ENCODE measurements at regions of chr19 and their contacts with region 1.

Region 1: GRCh38 chr19:10431943-10432735 is 11.8 kb downstream of the PDE4A start:
- DNase-seq: peak; percentile 88
- ATAC-seq: peak; percentile 53
- H3K4me3 ChIP-seq: peak overlapping the region in 4 of 5 experiments; percentile 29 to 60 (median 43)
- H3K4me3 Mint-ChIP-seq: peak overlapping the region; percentile 94
- H3K27ac ChIP-seq: no peak overlapping the region
- H3K27ac Mint-ChIP-seq: peak overlapping the region; percentile 91
- H3K4me1 ChIP-seq: peaks cover 49 to 55% of the 10 kb centered on the region in 2 donors
- H3K4me1 Mint-ChIP-seq: peaks cover 60% of the 10 kb centered on the region
- H3K27me3 ChIP-seq: peaks cover 0 to 25% (median 12%) of the 10 kb centered on the region in 4 experiments
- H3K27me3 Mint-ChIP-seq: peaks cover 13% of the 10 kb centered on the region
- CTCF ChIP-seq: no peak

Region 2: DNA sequence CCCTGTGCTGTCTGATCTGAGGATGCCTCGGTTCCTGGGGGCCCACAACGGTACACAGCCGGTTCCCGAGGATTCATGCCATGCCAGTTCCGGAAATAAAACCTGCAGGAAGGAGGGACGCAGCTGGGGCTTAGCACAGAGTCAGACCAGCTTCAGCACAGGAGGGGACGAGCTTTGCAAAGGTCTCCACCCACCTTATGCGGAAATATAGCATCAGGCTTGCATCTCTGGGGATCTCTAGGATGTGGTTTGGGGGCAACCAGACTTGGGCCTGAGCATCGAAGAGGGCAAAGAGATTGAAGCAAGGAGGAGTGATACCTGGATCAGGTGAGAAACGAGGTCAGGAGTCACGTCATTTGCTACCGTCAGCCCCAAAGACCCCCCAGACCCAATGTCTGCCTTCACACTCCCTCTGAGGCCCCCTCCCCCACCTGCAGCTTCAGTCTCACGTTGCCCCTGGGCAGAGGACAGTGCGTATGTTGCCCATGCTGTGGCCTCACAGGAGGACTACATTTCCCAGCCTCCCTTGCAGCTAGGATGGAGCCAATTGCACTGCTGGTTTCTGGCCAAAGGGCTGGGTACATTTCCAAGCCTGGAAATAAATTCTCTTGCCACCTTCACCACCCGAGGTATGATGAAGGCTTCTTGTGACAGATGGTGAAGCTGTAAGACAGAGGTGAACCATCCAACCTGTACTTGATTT is 63.9 kb before region 1 on chr19:
- CTCF ChIA-PET with region 1: no interaction called
- POLR2A ChIA-PET with region 1: no interaction called
- intact Hi-C with region 1: no loop called
- DNase-seq: no peak
- ATAC-seq: no peak
- H3K4me3 ChIP-seq: no peak overlapping the region
- H3K4me3 Mint-ChIP-seq: no peak overlapping the region
- H3K27ac ChIP-seq: no peak overlapping the region
- H3K27ac Mint-ChIP-seq: no peak overlapping the region
- H3K4me1 ChIP-seq: peaks cover under 1 to 3% of the 10 kb centered on the region in 2 donors
- H3K4me1 Mint-ChIP-seq: no peaks in the 10 kb centered on the region
- H3K27me3 ChIP-seq: no peaks in the 10 kb centered on the region
- H3K27me3 Mint-ChIP-seq: no peaks in the 10 kb centered on the region
- CTCF ChIP-seq: no peak

Region 3: DNA sequence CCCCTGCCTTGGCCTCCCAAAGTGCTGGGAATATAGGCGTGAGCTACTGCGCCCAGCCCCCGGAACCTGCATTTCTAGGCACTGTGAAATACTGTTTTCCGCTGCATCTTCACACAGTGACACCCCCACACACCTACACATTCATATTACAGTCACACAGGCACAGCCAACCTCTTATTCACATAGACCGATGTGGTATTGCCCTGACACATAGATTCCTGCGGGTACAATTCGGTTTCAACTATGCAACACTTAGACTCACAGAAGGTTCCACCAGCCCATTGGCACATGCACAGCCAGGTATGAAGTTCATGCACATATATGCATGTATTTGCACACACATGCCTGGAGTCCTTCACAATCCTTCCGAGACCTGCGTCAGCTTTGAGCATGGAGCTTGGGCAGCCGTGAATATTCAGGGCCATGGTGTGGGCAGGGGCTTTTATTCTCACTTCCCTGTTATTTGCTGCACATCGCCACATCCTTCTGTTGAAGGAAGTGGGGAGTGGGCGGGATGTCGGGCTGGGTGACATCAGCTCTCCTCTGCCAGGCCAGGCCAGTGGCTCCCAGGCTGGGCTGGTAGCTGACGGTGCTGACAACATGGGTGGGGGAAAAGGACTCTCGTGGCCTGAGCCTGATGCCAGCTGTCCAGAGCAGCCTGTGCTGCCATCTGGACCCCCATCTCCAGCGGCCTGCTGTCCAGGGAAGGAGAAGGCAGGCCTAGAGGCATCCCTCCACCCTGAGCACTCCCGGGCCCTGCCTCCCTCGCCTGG is 23.4 kb before region 1 on chr19:
- CTCF ChIA-PET with region 1: interaction called, 282 read pairs
- POLR2A ChIA-PET with region 1: interaction called, 15 read pairs
- intact Hi-C with region 1: loop called (anchors 1 kb)
- DNase-seq: peak; percentile 85
- ATAC-seq: peak; percentile 46
- H3K4me3 ChIP-seq: peak overlapping the region in 4 of 5 experiments; percentile 0 to 50 (median 25)
- H3K4me3 Mint-ChIP-seq: peak overlapping the region; percentile 71
- H3K27ac ChIP-seq: peak overlapping the region; percentile 78
- H3K27ac Mint-ChIP-seq: peak overlapping the region; percentile 74
- H3K4me1 ChIP-seq: peaks cover 69 to 97% of the 10 kb centered on the region in 2 donors
- H3K4me1 Mint-ChIP-seq: peaks cover 72% of the 10 kb centered on the region
- H3K27me3 ChIP-seq: no peaks in the 10 kb centered on the region
- H3K27me3 Mint-ChIP-seq: no peaks in the 10 kb centered on the region
- CTCF ChIP-seq: no peak

Region 4: GRCh38 chr19:10416380-10417257 is 15.5 kb before region 1 on chr19:
- CTCF ChIA-PET with region 1: interaction called, 115 read pairs
- POLR2A ChIA-PET with region 1: interaction called, 19 read pairs
- intact Hi-C with region 1: loop called (anchors 1 kb)
- DNase-seq: peak; percentile 99
- ATAC-seq: peak; percentile 70
- H3K4me3 ChIP-seq: peak overlapping the region; percentile 15 to 69 (median 49)
- H3K4me3 Mint-ChIP-seq: peak overlapping the region; percentile 85
- H3K27ac ChIP-seq: peak overlapping the region in 1 of 2 donors; percentile 28
- H3K27ac Mint-ChIP-seq: peak overlapping the region; percentile 94
- H3K4me1 ChIP-seq: peaks cover 66 to 82% of the 10 kb centered on the region in 2 donors
- H3K4me1 Mint-ChIP-seq: peaks cover 59% of the 10 kb centered on the region
- H3K27me3 ChIP-seq: peaks cover 0 to 46% (median 28%) of the 10 kb centered on the region in 4 experiments
- H3K27me3 Mint-ChIP-seq: peaks cover 29% of the 10 kb centered on the region
- CTCF ChIP-seq: peak; percentile 100

Region 5: GRCh38 chr19:10450853-10451609 is 18.9 kb after region 1 on chr19:
- CTCF ChIA-PET with region 1: interaction called, 10 read pairs
- POLR2A ChIA-PET with region 1: no interaction called
- intact Hi-C with region 1: no loop called
- DNase-seq: no peak
- ATAC-seq: no peak
- H3K4me3 ChIP-seq: no peak overlapping the region
- H3K4me3 Mint-ChIP-seq: no peak overlapping the region
- H3K27ac ChIP-seq: no peak overlapping the region
- H3K27ac Mint-ChIP-seq: no peak overlapping the region
- H3K4me1 ChIP-seq: peaks cover 0 to 4% of the 10 kb centered on the region in 2 donors
- H3K4me1 Mint-ChIP-seq: peaks cover 5% of the 10 kb centered on the region
- H3K27me3 ChIP-seq: peaks cover 0 to 9% (median 0%) of the 10 kb centered on the region in 4 experiments
- H3K27me3 Mint-ChIP-seq: peaks cover 9% of the 10 kb centered on the region
- CTCF ChIP-seq: no peak